ENCODE measurements at regions of chr4 and their contacts with region 1.

Region 1: GRCh38 chr4:182960746-182961145 is 43.6 kb upstream of the DCTD start:
- DNase-seq: no peak
- ATAC-seq: no peak
- H3K4me3 ChIP-seq: no peak overlapping the region
- H3K27ac ChIP-seq: no peak overlapping the region
- H3K4me1 ChIP-seq: no peaks in the 10 kb centered on the region; the same call in 1 of the 2 replicates
- H3K27me3 ChIP-seq: no peaks in the 10 kb centered on the region
- CTCF ChIP-seq: no peak
- POLR2A ChIP-seq: no peak
- RAD21 ChIP-seq: no peak

Region 2: GRCh38 chr4:182533964-182534363 is 426.8 kb before region 1 on chr4:
- CTCF ChIA-PET with region 1: no interaction called
- POLR2A ChIA-PET with region 1: no interaction called
- dilution Hi-C with region 1: no loop called
- in situ Hi-C with region 1: no loop called
- intact Hi-C with region 1: no loop called
- DNase-seq: peak; percentile 74
- ATAC-seq: peak; percentile 42
- H3K4me3 ChIP-seq: no peak overlapping the region
- H3K27ac ChIP-seq: no peak overlapping the region
- H3K4me1 ChIP-seq: peaks cover 2% of the 10 kb centered on the region
- H3K27me3 ChIP-seq: no peaks in the 10 kb centered on the region
- CTCF ChIP-seq: no peak
- POLR2A ChIP-seq: no peak
- RAD21 ChIP-seq: no peak

Region 3: GRCh38 chr4:183035726-183036415 is 75.1 kb after region 1 on chr4:
- CTCF ChIA-PET with region 1: no interaction called
- POLR2A ChIA-PET with region 1: no interaction called
- dilution Hi-C with region 1: no loop called
- in situ Hi-C with region 1: no loop called
- intact Hi-C with region 1: loop called (anchors 5 kb)
- DNase-seq: no peak
- ATAC-seq: no peak
- H3K4me3 ChIP-seq: no peak overlapping the region
- H3K27ac ChIP-seq: no peak overlapping the region
- H3K4me1 ChIP-seq: no peaks in the 10 kb centered on the region
- H3K27me3 ChIP-seq: peaks cover 35% of the 10 kb centered on the region
- CTCF ChIP-seq: no peak
- POLR2A ChIP-seq: no peak
- RAD21 ChIP-seq: no peak

Measured in IMR-90 (cell line).